Right cardiac atrium (tissue), 5 donors: ENCODE measurements at regions of chr2 and their contacts with region 1.

Region 1: DNA sequence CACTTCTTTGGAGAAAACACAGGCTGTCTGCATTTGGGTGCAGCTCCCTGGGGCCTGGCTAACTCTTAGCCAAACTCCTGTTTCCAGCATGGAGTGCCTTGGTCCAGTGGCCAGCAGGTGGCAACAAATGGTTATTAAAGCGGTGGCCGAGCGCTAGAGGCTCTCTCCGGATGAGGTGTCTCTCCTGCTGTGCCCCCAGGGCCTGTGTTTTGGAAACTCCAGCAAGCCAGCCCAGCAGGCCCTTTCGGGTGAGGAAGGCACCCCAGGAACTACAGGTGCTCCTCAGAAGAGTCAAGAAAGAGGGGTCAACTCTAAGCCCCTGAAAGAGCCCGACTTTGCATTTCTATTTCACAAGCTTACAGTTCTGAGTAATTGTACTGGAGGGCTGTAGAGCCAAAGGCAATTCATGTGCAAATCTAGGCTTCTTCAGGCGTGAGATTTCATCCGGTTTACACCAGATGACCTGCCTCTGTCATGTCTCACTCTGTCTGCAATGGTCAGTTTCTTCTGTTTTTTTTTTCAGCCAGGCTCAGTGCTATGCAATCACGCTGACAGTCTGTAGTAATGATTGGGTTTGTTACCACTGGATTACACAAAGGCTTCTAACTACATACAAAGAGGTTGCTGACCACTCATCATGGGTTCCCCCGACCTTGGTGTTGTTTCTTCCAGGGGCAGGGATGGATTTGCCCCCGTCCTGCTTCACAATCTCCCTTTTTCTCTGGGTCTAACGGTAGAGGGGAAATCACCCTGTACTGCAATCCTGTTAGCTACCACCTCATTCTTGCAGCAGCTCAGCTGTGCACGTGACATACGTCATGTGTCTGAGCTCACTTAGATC is 7.6 kb upstream of the CHRNA1 start:
- DNase-seq: peak; percentile 82 to 93 (median 89)
- ATAC-seq: peak; percentile 96
- H3K4me3 ChIP-seq: peak overlapping the region; percentile 12
- H3K27ac ChIP-seq: no peak overlapping the region
- H3K4me1 ChIP-seq: no peaks in the 10 kb centered on the region
- H3K27me3 ChIP-seq: no peaks in the 10 kb centered on the region

Region 2: GRCh38 chr2:174846941-174847938 is 75.4 kb after region 1 on chr2:
- intact Hi-C with region 1: no loop called
- DNase-seq: peak in 1 of 3 donors; percentile 48
- ATAC-seq: peak; percentile 75 to 94
- H3K4me3 ChIP-seq: peak overlapping the region; percentile 75
- H3K27ac ChIP-seq: peak overlapping the region; percentile 19
- H3K4me1 ChIP-seq: peaks cover 1% of the 10 kb centered on the region
- H3K27me3 ChIP-seq: no peaks in the 10 kb centered on the region

Region 3: GRCh38 chr2:174939046-174939445 is 167.2 kb after region 1 on chr2:
- intact Hi-C with region 1: no loop called
- DNase-seq: no peak
- ATAC-seq: no peak
- H3K4me3 ChIP-seq: no peak overlapping the region
- H3K27ac ChIP-seq: no peak overlapping the region
- H3K4me1 ChIP-seq: no peaks in the 10 kb centered on the region
- H3K27me3 ChIP-seq: no peaks in the 10 kb centered on the region

Region 4: GRCh38 chr2:174952607-174953006 is 180.8 kb after region 1 on chr2:
- intact Hi-C with region 1: no loop called
- DNase-seq: no peak
- ATAC-seq: no peak
- H3K4me3 ChIP-seq: no peak overlapping the region
- H3K27ac ChIP-seq: no peak overlapping the region
- H3K4me1 ChIP-seq: no peaks in the 10 kb centered on the region
- H3K27me3 ChIP-seq: no peaks in the 10 kb centered on the region

Region 5: GRCh38 chr2:174985630-174986029 is 213.8 kb after region 1 on chr2:
- intact Hi-C with region 1: loop called (anchors 2 to 5 kb)
- DNase-seq: no peak
- ATAC-seq: no peak
- H3K4me3 ChIP-seq: peak overlapping the region; percentile 25
- H3K27ac ChIP-seq: no peak overlapping the region
- H3K4me1 ChIP-seq: no peaks in the 10 kb centered on the region
- H3K27me3 ChIP-seq: no peaks in the 10 kb centered on the region

Region 6: GRCh38 chr2:174992886-174993285 is 221.0 kb after region 1 on chr2:
- intact Hi-C with region 1: loop called in 3 of 4 experiments (anchors 2 to 5 kb)
- DNase-seq: no peak
- ATAC-seq: no peak
- H3K4me3 ChIP-seq: no peak overlapping the region
- H3K27ac ChIP-seq: no peak overlapping the region
- H3K4me1 ChIP-seq: no peaks in the 10 kb centered on the region
- H3K27me3 ChIP-seq: no peaks in the 10 kb centered on the region